ENCODE measurements at regions of chr19 and their contacts with region 1.

Region 1: DNA sequence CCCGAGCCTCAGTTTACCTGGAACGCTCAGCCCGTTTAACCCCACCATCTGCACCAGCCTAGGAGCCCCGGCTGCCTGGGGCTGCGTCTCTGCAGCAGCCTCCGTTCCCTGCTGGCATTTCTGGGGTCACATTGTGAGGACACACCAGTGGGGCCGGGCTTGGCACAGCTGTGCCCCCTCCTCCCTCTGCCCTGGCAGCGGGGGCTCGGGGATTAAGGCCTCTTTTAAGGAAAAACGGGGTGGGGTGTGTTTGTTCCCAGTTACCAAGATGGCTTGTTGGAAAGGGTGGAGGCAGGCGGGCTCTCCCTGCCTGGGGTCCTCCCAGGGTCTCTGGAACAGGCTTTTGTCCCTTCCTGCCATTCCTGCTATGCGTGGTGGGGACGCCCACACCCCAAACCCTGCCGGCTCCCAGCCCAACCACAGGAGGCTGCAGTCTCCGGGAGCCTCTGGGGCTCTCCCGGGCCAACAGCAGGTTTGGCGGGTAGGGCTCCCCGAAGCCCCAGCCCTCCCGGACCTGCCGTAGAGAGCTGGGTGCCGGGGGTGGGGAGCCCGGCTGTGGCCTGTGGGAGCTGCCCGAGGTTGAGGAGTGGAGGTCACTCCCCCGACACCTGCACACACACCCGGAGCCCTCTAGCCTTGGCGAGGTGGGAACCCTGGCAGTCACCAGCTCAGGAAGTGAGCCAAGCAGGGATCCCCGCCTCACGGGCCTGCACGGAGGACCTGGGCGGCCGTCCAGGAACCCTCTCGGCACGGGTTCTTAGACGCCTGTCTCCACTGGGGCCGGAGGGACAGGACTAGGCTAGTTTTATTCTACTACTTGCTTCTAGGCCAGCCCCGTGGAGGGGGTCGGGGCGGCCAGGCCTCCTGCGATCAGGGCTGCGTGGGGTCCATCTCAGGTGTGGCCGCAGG is 36.9 kb downstream of the GADD45B start:
- DNase-seq: no peak
- H3K4me3 ChIP-seq: no peak overlapping the region
- H3K27ac ChIP-seq: no peak overlapping the region
- H3K4me1 ChIP-seq: peaks cover 7% of the 10 kb centered on the region
- H3K27me3 ChIP-seq: no peaks in the 10 kb centered on the region
- CTCF ChIP-seq: no peak

Region 2: GRCh38 chr19:2302319-2303210 is 210.2 kb before region 1 on chr19:
- CTCF ChIA-PET with region 1: no interaction called
- POLR2A ChIA-PET with region 1: interaction called, 20 read pairs
- intact Hi-C with region 1: no loop called
- DNase-seq: no peak
- H3K4me3 ChIP-seq: no peak overlapping the region
- H3K27ac ChIP-seq: no peak overlapping the region
- H3K4me1 ChIP-seq: no peaks in the 10 kb centered on the region
- H3K27me3 ChIP-seq: no peaks in the 10 kb centered on the region
- CTCF ChIP-seq: no peak

Region 3: DNA sequence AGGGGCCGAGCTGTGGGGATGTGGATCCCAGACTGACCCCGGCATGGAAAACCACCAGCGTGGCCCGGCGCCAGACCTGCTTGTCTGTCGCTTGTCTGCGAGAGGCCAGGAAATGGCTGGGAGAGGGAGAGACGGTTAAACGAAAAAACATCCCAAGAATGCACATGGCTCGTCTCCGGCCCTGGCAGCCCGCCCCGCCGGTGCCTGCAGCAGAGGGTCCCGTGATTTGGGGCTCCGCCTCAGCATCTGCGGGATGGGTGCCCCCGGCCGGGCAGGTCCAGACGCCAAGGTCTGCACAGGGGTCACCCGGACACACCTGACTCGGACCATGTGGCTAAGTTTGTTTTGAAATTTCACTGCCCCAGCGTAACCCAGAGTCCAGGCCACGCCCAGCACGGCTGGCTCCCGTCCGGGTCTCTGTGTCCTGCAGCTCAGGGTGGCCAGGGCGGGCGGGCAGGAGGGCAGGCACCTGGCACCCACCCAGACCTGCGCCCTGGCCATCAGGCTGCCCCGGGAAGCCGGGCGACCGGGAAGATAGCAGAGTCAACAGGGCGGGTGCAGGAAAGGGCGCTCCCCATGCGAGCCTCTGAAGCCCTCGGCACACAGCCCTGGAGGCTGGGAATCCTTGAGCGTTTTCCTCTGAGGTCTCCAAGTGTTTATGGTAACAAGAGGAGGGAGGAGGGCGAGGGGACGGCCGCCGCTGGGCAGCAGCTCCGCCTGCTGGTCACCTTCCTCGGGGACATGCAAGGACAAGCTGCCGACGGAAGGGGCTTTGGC is 66.3 kb after region 1 on chr19:
- CTCF ChIA-PET with region 1: no interaction called
- POLR2A ChIA-PET with region 1: no interaction called
- intact Hi-C with region 1: no loop called
- DNase-seq: peak; percentile 87
- H3K4me3 ChIP-seq: peak overlapping the region; percentile 49
- H3K27ac ChIP-seq: no peak overlapping the region
- H3K4me1 ChIP-seq: peaks cover 14% of the 10 kb centered on the region
- H3K27me3 ChIP-seq: no peaks in the 10 kb centered on the region
- CTCF ChIP-seq: peak; percentile 88